Mammary epithelial cell (primary cell): ENCODE measurements at regions of chr4 and their contacts with region 1.

Region 1: GRCh38 chr4:124111922-124112321 is 600.6 kb downstream of the ANKRD50 start:
- DNase-seq: peak; percentile 52
- H3K4me3 ChIP-seq: no peak overlapping the region
- H3K27ac ChIP-seq: no peak overlapping the region
- H3K4me1 ChIP-seq: no peaks in the 10 kb centered on the region
- H3K27me3 ChIP-seq: no peaks in the 10 kb centered on the region
- CTCF ChIP-seq: peak; percentile 58 to 66

Region 2: GRCh38 chr4:123102897-123103471 is 1008.9 kb before region 1 on chr4:
- CTCF ChIA-PET with region 1: no interaction called
- dilution Hi-C with region 1: no loop called
- in situ Hi-C with region 1: loop called in 1 of 2 experiments (anchors 25 kb)
- intact Hi-C with region 1: loop called (anchors 2 kb)
- DNase-seq: peak; percentile 40
- H3K4me3 ChIP-seq: no peak overlapping the region
- H3K27ac ChIP-seq: no peak overlapping the region
- H3K4me1 ChIP-seq: no peaks in the 10 kb centered on the region
- H3K27me3 ChIP-seq: no peaks in the 10 kb centered on the region
- CTCF ChIP-seq: peak; percentile 60 to 71

Region 3: DNA sequence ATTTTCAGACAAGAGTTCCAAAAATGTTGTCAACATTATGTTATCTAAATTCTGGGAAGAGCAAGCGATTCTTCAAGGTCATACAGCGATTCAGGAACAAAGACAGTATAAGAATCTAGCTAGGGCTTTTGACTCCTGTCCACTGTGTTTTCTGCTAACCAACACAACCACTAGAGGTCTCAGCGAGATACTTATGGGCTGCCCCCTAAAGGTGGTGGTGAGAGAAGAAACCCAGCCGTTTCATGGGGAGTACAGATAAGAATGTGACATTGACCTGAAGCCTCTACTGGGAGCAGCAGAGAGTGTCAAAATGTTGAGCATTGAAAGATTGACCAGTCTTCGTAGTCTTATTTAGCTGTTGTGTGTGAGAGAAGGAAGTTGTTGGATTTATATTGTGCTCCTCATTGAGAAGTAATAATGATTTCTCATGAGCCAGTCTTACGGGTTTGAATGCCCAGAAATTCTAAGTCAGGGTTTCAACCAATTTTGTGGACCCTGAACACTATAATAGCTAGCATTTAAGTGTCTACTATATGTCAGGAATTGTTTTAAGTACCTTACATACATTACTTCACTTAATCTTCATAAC is 547.1 kb before region 1 on chr4:
- CTCF ChIA-PET with region 1: no interaction called
- dilution Hi-C with region 1: no loop called
- in situ Hi-C with region 1: no loop called
- intact Hi-C with region 1: loop called (anchors 2 kb)
- DNase-seq: peak; percentile 72
- H3K4me3 ChIP-seq: no peak overlapping the region
- H3K27ac ChIP-seq: no peak overlapping the region
- H3K4me1 ChIP-seq: peaks cover 5% of the 10 kb centered on the region
- H3K27me3 ChIP-seq: no peaks in the 10 kb centered on the region
- CTCF ChIP-seq: peak; percentile 92 to 99

Region 4: DNA sequence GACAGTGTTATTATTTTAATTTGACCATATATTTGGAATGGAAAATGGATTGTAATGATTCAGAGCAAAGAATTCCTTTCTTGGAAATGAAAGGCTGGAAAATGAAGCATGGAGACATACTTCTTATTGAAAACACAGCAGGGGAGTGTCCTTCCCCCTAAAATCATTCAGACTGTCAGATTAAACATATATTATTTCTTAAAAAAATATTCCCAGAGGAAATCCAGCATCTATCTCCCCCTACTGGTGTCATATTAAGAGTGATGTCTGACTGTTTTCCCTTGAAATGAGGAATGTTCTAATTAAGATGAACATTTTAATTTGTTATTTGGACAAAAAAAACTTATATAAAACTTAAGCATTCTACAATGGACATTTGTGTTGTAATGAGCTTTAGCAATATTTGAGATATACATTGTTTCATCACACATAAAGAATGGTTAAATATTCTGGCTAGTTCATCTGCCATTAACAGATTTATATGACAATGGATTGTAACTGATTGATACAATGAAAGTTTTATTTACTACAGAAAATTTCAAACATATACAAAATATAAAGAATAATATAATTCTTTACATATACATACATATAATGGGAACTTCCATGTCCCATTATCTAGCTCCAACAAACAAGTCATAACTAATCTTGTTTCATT is 450.7 kb before region 1 on chr4:
- CTCF ChIA-PET with region 1: no interaction called
- dilution Hi-C with region 1: no loop called
- in situ Hi-C with region 1: loop called in 1 of 2 experiments (anchors 25 kb)
- intact Hi-C with region 1: loop called (anchors 2 kb)
- DNase-seq: no peak
- H3K4me3 ChIP-seq: no peak overlapping the region
- H3K27ac ChIP-seq: no peak overlapping the region
- H3K4me1 ChIP-seq: no peaks in the 10 kb centered on the region
- H3K27me3 ChIP-seq: no peaks in the 10 kb centered on the region
- CTCF ChIP-seq: peak; percentile 60 to 64

Region 5: DNA sequence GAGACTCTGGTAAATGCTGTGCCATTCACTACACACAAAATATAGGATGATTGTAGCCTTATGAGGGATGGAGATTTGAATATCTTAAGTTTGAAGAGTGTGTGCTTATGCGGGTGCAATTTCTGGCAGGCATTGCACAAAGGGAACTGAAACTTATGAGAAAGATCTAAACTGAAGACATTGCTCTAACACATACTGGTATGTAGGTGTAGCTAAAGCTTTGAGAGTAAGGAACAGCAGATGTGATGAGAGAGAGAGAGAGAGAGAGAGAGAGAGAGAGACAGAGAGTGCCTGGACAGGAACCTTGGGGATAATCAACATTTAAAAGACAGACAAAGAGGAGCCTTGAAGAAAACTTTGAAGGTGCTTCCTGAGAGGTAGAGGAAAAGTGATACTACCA is 335.7 kb before region 1 on chr4:
- CTCF ChIA-PET with region 1: no interaction called
- dilution Hi-C with region 1: no loop called
- in situ Hi-C with region 1: loop called (anchors 10 to 25 kb)
- intact Hi-C with region 1: loop called (anchors 1 kb)
- DNase-seq: no peak
- H3K4me3 ChIP-seq: no peak overlapping the region
- H3K27ac ChIP-seq: no peak overlapping the region
- H3K4me1 ChIP-seq: no peaks in the 10 kb centered on the region
- H3K27me3 ChIP-seq: no peaks in the 10 kb centered on the region
- CTCF ChIP-seq: no peak

Region 6: DNA sequence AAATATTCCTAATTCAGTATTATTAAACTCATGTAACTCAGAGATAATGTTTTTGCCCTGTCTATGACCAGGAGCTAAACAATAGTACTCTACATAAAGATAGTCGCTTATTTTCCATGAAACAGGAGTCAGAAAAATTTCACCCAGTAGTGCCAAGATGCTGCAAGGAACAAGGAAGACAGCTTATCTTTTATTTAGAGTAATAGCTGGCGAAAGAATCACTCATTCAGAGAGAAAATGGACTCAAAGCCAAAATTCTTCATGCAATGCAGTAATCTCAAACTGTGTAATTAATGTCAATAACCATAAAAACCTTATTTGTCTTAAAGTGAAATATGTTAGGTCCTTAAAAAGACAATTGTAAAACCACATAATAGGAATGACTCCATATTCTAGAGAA is 122.8 kb after region 1 on chr4:
- CTCF ChIA-PET with region 1: no interaction called
- dilution Hi-C with region 1: no loop called
- in situ Hi-C with region 1: no loop called
- intact Hi-C with region 1: no loop called
- DNase-seq: no peak
- H3K4me3 ChIP-seq: no peak overlapping the region
- H3K27ac ChIP-seq: no peak overlapping the region
- H3K4me1 ChIP-seq: no peaks in the 10 kb centered on the region
- H3K27me3 ChIP-seq: no peaks in the 10 kb centered on the region
- CTCF ChIP-seq: no peak